ENCODE measurements at regions of chr14 and their contacts with region 1.

Region 1: GRCh38 chr14:30982533-30982932 is 42.9 kb upstream of the AP4S1 start:
- DNase-seq: no peak
- ATAC-seq: peak; percentile 74
- H3K4me3 Mint-ChIP-seq: no peak overlapping the region
- H3K27ac Mint-ChIP-seq: peak overlapping the region; percentile 53
- H3K4me1 Mint-ChIP-seq: peaks cover 53% of the 10 kb centered on the region
- H3K27me3 Mint-ChIP-seq: no peaks in the 10 kb centered on the region
- CTCF ChIP-seq: no peak

Region 2: DNA sequence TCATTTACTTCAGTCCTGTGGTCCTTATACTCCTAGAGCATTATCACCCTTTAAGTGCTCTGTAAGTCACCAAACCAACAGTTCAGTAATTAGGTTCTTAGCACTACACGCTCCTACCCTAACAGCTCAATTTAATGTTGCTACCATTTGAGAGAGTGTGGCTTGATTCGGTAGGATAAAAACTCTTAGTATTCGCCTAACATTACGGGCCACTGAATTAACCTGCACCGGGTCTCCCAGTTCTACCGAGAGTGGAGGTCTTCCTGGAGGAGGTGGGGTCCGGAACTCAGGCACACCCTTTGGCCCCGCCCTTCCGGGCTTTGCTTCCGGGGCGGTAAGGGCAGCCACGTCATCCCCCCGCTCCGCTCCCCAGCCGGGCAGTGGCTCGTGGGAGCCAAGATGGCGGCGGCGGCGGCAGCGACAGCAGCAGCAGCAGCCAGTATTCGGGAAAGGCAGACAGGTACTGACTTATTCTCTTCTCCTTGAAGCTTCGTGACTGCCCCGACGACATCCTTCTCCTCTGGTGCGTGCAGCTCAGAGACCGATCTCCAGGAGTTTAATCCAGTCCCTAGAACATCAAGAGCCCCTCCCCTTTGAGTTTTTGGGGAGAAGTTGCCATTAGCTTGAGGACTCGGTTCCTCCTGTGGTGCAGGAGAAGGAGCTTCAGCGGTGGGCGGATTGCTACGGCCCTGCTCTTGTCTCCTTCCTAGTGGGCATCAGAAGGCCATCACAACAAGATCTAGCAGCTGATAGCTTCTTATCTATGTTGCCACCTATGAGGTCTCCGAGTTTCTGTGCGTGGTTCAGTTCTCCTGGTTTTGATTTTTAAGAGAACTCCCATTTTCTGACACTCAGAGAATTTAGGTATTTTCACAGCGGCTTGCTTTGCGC is 360.3 kb before region 1 on chr14 and contains the start of gene SCFD1:
- CTCF ChIA-PET with region 1: no interaction called
- POLR2A ChIA-PET with region 1: no interaction called
- intact Hi-C with region 1: loop called (anchors 5 kb)
- DNase-seq: peak; percentile 92
- ATAC-seq: peak; percentile 97
- H3K4me3 Mint-ChIP-seq: peak within 1 kb of the TSS; percentile 93
- H3K27ac Mint-ChIP-seq: peak within 1 kb of the TSS; percentile 93
- H3K4me1 Mint-ChIP-seq: peaks cover 47% of the 10 kb centered on the region
- H3K27me3 Mint-ChIP-seq: no peaks in the 10 kb centered on the region
- CTCF ChIP-seq: no peak
- total RNA-seq, gene SCFD1: 70.1 and 83.6 TPM in 2 replicates

Region 3: GRCh38 chr14:31084385-31084784 is 101.9 kb after region 1 on chr14:
- CTCF ChIA-PET with region 1: interaction called, 20 read pairs
- POLR2A ChIA-PET with region 1: interaction called, 4 read pairs
- intact Hi-C with region 1: loop called (anchors 1 kb)
- DNase-seq: peak; percentile 33
- ATAC-seq: peak; percentile 98
- H3K4me3 Mint-ChIP-seq: no peak overlapping the region
- H3K27ac Mint-ChIP-seq: no peak overlapping the region
- H3K4me1 Mint-ChIP-seq: peaks cover 9% of the 10 kb centered on the region
- H3K27me3 Mint-ChIP-seq: no peaks in the 10 kb centered on the region
- CTCF ChIP-seq: no peak

Region 4: GRCh38 chr14:31127690-31128089 is 145.2 kb after region 1 on chr14:
- CTCF ChIA-PET with region 1: interaction called, 4 read pairs
- POLR2A ChIA-PET with region 1: no interaction called
- intact Hi-C with region 1: loop called (anchors 5 kb)
- DNase-seq: no peak
- ATAC-seq: no peak
- H3K4me3 Mint-ChIP-seq: no peak overlapping the region
- H3K27ac Mint-ChIP-seq: peak overlapping the region; percentile 10
- H3K4me1 Mint-ChIP-seq: peaks cover 13% of the 10 kb centered on the region
- H3K27me3 Mint-ChIP-seq: no peaks in the 10 kb centered on the region
- CTCF ChIP-seq: no peak

Region 5: DNA sequence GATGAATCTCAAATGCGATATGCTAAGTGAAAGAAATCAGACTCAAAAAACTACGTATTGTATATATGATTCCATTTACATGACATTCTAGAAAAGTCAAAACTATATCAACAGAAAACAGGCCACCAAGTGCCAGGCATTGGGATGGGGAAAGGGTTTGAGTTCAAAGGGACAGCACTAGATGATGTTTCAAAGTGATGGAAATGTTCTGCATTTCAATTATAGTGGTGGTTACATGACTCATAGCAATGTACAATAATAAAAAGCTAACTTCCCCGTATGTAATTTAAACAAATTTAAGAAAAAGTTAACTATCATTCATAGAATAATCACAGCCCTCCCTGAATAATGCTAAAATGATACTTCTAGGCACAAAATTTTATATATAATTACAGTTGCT is 211.6 kb after region 1 on chr14:
- CTCF ChIA-PET with region 1: no interaction called
- POLR2A ChIA-PET with region 1: interaction called, 15 read pairs
- intact Hi-C with region 1: no loop called
- DNase-seq: no peak
- ATAC-seq: no peak
- H3K4me3 Mint-ChIP-seq: no peak overlapping the region
- H3K27ac Mint-ChIP-seq: no peak overlapping the region
- H3K4me1 Mint-ChIP-seq: peaks cover 37% of the 10 kb centered on the region
- H3K27me3 Mint-ChIP-seq: no peaks in the 10 kb centered on the region
- CTCF ChIP-seq: no peak

Measured in activated B cell treated with CpG ODN at 0.5 μM for 24 hours (primary cell).